GM13976 (cell line): ENCODE measurements at regions of chr6 and their contacts with region 1.

Region 1: DNA sequence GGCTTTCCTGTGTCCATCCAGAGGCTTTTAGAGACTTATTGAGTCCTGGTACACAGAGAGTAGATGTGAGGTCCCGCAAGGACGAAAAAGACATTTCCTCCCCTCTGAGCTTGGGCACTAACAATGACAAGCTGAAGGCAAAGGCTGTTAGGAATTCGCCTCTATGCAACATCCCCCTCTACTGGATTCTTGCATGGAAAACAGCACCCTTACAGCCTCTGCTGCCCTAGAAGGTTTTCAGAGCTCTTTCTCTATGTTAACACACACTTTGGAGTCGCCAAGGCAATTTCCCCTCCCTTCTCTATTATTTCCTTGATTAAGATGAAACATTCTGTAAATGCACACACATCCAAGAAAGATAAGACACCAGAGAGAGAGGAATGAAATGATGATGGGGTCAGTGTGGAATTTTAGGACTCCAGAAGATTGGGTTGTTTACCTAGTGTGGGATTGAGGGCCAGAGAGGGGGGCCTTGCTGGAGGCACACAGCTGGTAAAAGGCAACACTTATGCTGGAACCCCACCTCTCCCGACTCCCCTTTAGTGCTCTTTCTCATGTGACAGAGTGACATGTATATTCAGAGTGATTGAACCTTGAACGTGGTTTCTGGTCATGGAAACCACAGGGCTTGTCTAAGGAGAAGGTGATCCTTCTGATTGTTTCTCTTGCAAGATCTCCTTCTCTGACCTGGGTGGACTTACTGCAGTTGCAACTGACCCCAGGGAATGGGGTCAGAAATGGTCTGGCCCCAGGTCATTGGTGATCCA is 300.7 kb downstream of the CLIC5 start:
- DNase-seq: peak; percentile 61
- CTCF ChIP-seq: peak; percentile 66

Region 2: DNA sequence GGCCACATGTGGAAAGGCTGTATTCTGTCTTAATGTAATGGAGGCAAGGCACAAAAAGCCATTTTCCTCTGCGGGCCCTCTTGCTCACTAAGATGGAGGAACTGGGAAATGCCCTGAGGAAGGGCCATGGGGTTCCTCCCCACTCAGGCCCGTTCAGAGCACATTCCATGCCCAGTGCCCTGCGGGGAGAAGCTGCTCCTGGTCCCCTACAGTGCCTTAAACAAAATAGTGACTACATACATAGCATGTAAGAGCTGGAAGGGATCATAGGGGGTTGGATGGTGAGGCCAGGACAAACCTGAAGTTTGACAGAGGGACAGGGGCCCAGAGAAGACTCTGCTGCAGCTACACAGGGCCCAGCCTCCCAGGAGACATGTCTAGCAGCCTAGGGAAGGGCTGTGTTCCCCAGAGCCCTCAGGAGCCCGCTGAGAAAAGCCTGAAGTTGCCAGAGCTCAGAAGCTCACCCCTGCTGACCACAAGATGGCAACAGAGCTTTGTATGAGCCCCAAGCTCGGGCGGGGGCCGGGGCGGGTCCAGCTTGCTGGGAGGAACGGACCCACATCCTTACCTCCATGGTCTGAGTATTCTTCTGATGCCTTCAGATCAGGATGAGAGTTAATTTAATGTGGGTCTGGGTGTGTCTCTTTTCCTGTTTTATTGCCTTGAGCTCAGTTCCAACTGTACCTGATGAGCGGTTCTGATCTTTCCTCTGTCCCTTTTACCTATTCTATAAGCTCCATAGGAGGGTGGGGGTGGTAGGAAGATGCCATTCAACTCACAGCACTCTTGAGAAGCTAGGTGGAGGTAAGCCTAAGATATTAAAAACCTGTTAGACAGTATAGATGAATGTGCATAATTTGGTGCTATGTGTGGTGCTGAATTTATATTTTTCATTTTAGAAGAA is 1084.5 kb before region 1 on chr6:
- in situ Hi-C with region 1: loop called (anchors 25 kb)
- DNase-seq: peak; percentile 60
- CTCF ChIP-seq: peak; percentile 27

Region 3: DNA sequence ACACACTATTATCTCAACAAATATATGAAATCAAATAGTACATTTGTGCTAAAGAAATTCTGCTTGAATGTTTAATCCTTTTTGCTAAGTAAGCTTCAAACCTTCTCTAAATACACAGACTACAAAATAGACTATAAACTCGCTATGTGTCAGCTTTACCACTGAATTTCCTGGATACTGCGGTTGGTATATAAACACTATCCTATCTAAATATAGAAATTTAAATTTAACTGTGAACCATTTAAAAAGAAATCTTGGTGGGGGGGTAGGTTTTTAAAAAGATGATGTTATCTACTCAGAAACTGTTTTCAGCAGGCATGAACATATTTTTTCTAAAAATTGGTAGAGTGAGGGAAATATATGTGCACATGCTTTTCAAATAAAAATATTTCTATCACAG is 693.2 kb before region 1 on chr6:
- in situ Hi-C with region 1: no loop called
- DNase-seq: no peak
- CTCF ChIP-seq: no peak

Region 4: DNA sequence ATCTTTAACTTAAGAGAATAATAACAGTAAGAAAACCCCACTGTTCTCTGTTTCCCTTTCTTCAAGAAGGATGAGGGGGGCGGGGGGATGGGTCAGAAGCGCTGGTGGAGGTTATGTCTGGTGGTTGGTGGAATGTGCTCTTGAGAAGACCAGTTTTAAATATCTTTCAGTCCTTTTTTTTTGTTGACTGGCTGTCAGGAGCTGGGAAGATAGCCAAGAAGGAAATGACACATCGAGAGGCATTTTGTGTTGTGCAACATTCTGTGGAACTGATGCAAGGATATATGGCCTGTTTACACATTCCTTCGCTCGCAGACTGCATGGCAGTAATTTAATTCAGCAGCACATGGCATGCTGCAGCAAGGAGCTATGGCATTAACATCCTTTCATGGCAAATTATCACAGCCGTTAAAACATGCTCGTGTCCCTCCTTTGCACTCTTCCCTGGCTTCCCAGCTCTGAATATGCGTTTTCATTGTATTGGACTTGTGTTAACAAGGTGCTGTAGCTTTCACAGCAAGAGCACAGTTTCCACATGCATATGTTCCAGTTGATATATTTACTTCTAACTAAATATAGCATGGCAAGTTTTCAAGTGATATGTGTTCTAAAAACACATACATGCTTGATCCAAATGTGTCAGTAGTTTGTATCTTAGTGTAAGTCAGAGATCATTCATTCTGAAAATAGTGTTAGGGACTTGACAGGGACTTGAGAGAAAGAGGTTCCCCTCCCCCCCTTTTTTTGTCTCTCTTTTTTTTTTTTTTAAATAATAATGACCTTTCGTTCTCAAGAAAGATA is 269.0 kb before region 1 on chr6:
- in situ Hi-C with region 1: loop called (anchors 25 kb)
- DNase-seq: no peak
- CTCF ChIP-seq: no peak

Region 5: DNA sequence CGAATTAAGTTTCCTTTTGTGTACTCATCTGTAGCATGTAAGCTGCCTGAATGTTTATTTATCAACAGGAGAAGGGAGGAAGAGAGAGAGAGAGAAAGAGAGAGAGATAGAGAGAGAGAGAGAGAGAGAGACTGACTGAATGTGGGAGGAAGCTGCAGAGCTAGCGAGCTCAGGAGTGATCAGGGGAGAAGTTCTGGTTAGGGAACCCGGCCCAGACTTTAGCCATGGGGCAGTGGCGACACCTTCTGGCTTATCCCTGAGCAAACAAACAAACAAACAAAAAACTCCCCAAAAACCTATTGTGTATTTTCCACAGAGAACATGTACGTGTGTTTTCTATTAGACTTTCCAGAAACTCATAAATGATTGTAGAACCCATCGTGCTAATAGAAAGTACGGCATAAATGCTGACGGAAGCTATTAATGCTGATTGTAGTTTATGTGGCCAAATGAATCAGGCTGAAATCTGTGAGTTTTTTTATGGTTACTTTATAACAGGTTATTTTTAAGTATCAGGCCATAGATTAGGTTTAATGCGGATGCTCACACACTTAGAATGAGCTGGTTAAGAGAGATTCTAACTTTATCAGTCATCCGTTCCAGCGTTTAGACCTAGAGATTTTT is 207.9 kb after region 1 on chr6:
- in situ Hi-C with region 1: loop called (anchors 25 kb)
- DNase-seq: peak; percentile 41
- CTCF ChIP-seq: peak; percentile 71